H1 (cell line): ENCODE measurements at regions of chr1 and their contacts with region 1.

Region 1: GRCh38 chr1:208476340-208477041 is 232.3 kb upstream of the PLXNA2 start:
- DNase-seq: peak; percentile 25 to 50
- H3K4me3 ChIP-seq: no peak overlapping the region
- H3K27ac ChIP-seq: peak overlapping the region; percentile 37; the same call in 1 of the 2 replicates
- H3K4me1 ChIP-seq: peaks cover 0 to 11% (median 4%) of the 10 kb centered on the region in 4 experiments; a peak in 2 of 7 replicates
- H3K27me3 ChIP-seq: no peaks in the 10 kb centered on the region; a peak in 1 of 7 replicates
- CTCF ChIP-seq: peak in 2 of 3 experiments; percentile 60 to 73; a peak in 3 of 4 replicates
- EP300 ChIP-seq: 0 out of 3 replicates have a peak, but pooled peaks of 1 of the 2 experiments have one; percentile 53
- POLR2A ChIP-seq: no peak
- RAD21 ChIP-seq: peak; percentile 58 to 69

Region 2: DNA sequence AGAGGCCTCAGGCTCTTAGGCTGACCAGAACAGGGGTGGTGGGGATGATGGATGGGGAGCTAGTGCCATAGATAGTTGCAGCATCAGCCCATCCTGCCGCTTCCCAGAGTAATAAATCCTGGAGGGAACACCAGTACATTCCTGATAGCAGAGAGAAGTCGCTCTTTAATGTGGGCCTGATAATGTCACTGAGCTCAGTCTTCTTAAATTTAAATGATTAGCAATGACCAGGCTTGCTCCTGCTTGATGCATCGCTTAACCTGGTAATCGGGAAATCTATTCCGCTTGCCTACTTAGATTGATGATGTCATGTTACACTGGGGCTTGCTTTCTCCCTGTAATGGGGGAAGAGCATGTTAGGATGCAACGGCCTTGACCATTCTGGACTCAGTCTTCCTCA is 13.7 kb before region 1 on chr1:
- CTCF ChIA-PET with region 1: interaction called, 19 read pairs
- POLR2A ChIA-PET with region 1: no interaction called
- DNase-seq: no peak
- H3K4me3 ChIP-seq: no peak overlapping the region
- H3K27ac ChIP-seq: no peak overlapping the region
- H3K4me1 ChIP-seq: no peaks in the 10 kb centered on the region
- H3K27me3 ChIP-seq: no peaks in the 10 kb centered on the region
- CTCF ChIP-seq: no peak
- EP300 ChIP-seq: no peak
- POLR2A ChIP-seq: no peak
- RAD21 ChIP-seq: no peak

Region 3: GRCh38 chr1:208497866-208498541 is 21.5 kb after region 1 on chr1:
- CTCF ChIA-PET with region 1: interaction called, 22 read pairs
- POLR2A ChIA-PET with region 1: no interaction called
- DNase-seq: no peak
- H3K4me3 ChIP-seq: no peak overlapping the region
- H3K27ac ChIP-seq: no peak overlapping the region
- H3K4me1 ChIP-seq: no peaks in the 10 kb centered on the region
- H3K27me3 ChIP-seq: no peaks in the 10 kb centered on the region
- CTCF ChIP-seq: no peak
- EP300 ChIP-seq: no peak
- POLR2A ChIP-seq: no peak
- RAD21 ChIP-seq: no peak

Region 4: DNA sequence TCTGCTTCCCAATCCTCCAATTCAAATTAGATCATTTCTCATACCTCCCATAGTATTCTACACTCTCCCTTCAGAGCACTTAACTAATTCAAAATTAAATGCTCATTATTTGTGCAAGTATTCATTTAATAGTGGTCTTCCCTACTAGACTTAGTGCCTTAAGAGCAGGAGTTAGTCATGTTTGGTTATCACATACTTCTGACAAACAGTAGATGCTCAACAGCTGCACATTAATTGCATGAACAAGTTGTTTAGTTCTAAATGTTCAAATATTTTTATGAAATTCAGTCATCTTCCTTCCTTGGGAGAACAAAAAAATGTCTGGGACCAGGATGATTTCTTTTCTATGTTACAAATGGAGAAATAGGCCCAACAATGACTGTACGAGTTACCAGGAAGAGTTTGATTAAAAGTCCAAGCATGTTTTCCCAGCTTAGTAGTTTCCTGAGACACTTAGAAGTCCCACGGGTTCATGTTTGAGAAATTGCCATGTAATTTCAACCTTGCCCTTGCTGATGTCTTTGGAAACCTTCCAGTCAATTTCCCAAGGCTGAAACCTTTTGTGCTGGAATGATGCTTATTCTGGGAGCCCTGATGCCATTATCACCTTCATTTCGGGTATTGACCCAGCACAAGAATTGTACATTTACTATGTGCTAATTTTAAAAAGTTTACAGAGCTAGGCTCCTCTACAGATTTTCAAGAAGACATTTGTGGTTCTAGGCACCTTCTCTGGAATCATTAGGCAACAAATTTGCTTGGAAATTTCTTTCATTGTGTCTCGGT is 205.6 kb after region 1 on chr1:
- CTCF ChIA-PET with region 1: no interaction called
- POLR2A ChIA-PET with region 1: no interaction called
- DNase-seq: no peak
- H3K4me3 ChIP-seq: no peak overlapping the region
- H3K27ac ChIP-seq: no peak overlapping the region
- H3K4me1 ChIP-seq: no peaks in the 10 kb centered on the region
- H3K27me3 ChIP-seq: no peaks in the 10 kb centered on the region
- CTCF ChIP-seq: no peak
- EP300 ChIP-seq: no peak
- POLR2A ChIP-seq: no peak
- RAD21 ChIP-seq: no peak